BJ (cell line): ENCODE measurements at regions of chr10 and their contacts with region 1.

Region 1: DNA sequence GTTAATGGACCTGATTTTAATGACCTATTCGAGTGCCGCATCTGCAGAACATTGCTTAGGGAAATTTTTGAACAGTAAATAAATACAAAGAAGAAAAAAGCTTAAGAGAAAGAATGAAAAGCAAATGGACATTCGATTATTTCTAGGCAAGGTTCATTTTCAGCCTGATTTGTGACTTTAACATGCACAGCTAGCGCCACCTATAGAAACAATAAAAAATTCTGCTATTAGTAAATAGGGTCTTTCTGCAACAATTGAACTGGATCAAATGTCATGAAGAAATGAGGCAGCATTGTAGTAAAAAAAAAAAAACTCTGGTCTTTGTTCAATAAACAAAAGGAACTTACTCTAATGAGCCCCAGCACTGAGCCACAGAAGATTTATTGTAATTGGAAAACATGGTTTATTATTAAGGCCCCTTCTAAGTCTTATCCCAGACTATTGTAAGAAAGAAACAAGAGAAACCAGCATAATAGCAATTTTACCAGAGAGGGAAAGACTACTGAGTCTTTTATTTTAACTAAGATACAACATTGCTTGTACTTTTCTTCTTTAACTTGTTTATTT is 41.4 kb upstream of the GHITM start:
- DNase-seq: no peak
- H3K4me3 ChIP-seq: no peak overlapping the region
- H3K27me3 ChIP-seq: no peaks in the 10 kb centered on the region
- CTCF ChIP-seq: peak; percentile 64

Region 2: GRCh38 chr10:84059523-84059922 is 38.3 kb before region 1 on chr10:
- CTCF ChIA-PET with region 1: interaction called, 33 read pairs
- POLR2A ChIA-PET with region 1: no interaction called
- DNase-seq: no peak
- H3K4me3 ChIP-seq: no peak overlapping the region
- H3K27me3 ChIP-seq: no peaks in the 10 kb centered on the region
- CTCF ChIP-seq: no peak; the same call in 1 of the 2 replicates